Transverse colon (tissue), 4 donors: ENCODE measurements at regions of chr19 and their contacts with region 1.

Region 1: DNA sequence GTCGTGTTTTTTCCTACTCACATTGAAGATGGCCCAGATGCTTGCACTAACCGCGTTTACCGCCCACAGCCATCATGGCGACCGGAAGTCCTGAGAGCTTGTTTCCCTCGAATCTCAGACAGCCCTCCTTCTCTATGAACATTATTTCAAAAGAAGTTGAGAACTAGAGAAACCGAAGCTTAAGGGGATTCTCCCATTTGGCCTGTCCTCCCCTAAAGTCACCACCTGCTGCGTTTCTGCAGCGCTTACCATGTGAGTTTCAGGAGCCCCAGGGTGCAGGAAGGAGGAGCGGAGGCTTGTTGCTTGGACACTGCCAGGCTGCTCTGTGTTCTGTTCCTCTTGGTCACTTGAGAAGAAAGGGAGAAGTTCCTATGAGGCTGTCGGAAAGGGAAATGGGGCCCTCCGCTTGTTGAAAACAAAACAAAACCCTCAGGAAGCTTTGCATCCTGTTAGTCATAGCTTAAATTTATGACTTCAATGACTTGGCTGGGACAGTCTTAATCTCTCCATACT is 6.2 kb downstream of the CARD8 start:
- DNase-seq: peak; percentile 58
- H3K4me3 ChIP-seq: peak overlapping the region in 3 of 4 donors; percentile 4 to 40 (median 16)
- H3K27ac ChIP-seq: peak overlapping the region; percentile 64 to 76 (median 66)
- H3K4me1 ChIP-seq: peaks cover 3 to 20% (median 6%) of the 10 kb centered on the region in 4 donors
- H3K27me3 ChIP-seq: no peaks in the 10 kb centered on the region
- CTCF ChIP-seq: no peak
- EP300 ChIP-seq: no peak
- POLR2A ChIP-seq: peak; percentile 50

Region 2: GRCh38 chr19:47124937-47125668 is 1124.5 kb before region 1 on chr19:
- in situ Hi-C with region 1: no loop called
- intact Hi-C with region 1: loop called (anchors 5 kb)
- DNase-seq: no peak
- H3K4me3 ChIP-seq: no peak overlapping the region
- H3K27ac ChIP-seq: peak overlapping the region in 3 of 4 donors; percentile 25 to 49 (median 29)
- H3K4me1 ChIP-seq: peaks cover 0 to 9% (median 5%) of the 10 kb centered on the region in 4 donors
- H3K27me3 ChIP-seq: no peaks in the 10 kb centered on the region
- CTCF ChIP-seq: peak; percentile 70 to 93 (median 83)
- EP300 ChIP-seq: no peak
- POLR2A ChIP-seq: no peak